Vagina (tissue), 2 donors: ENCODE measurements at regions of chr3 and their contacts with region 1.

Region 1: GRCh38 chr3:102229062-102229655 is 205.7 kb upstream of the ZPLD1 start:
- DNase-seq: no peak
- H3K4me3 ChIP-seq: no peak overlapping the region
- H3K27ac ChIP-seq: no peak overlapping the region
- H3K4me1 ChIP-seq: no peaks in the 10 kb centered on the region
- H3K27me3 ChIP-seq: no peaks in the 10 kb centered on the region
- CTCF ChIP-seq: peak; percentile 74 to 92 (median 89)
- POLR2A ChIP-seq: no peak

Region 2: GRCh38 chr3:101809178-101810021 is 419.8 kb before region 1 on chr3:
- intact Hi-C with region 1: loop called (anchors 5 kb)
- DNase-seq: no peak
- H3K4me3 ChIP-seq: no peak overlapping the region
- H3K27ac ChIP-seq: peak overlapping the region; percentile 53
- H3K4me1 ChIP-seq: peaks cover 16% of the 10 kb centered on the region
- H3K27me3 ChIP-seq: no peaks in the 10 kb centered on the region
- CTCF ChIP-seq: peak; percentile 41 to 78 (median 76)
- POLR2A ChIP-seq: no peak

Region 3: GRCh38 chr3:102529452-102529851 is 300.3 kb after region 1 on chr3:
- intact Hi-C with region 1: no loop called
- DNase-seq: no peak
- H3K4me3 ChIP-seq: no peak overlapping the region
- H3K27ac ChIP-seq: no peak overlapping the region
- H3K4me1 ChIP-seq: peaks cover 7% of the 10 kb centered on the region
- H3K27me3 ChIP-seq: no peaks in the 10 kb centered on the region
- CTCF ChIP-seq: no peak
- POLR2A ChIP-seq: no peak